ENCODE measurements at regions of chr10 and their contacts with region 1.

Region 1: GRCh38 chr10:2978111-2978510 is 89.2 kb upstream of the PFKP start:
- DNase-seq: no peak
- H3K4me3 Mint-ChIP-seq: no peak overlapping the region
- H3K27ac Mint-ChIP-seq: no peak overlapping the region
- H3K4me1 Mint-ChIP-seq: no peaks in the 10 kb centered on the region
- H3K27me3 Mint-ChIP-seq: peaks cover 4% of the 10 kb centered on the region

Region 2: GRCh38 chr10:2839081-2839725 is 138.9 kb before region 1 on chr10:
- intact Hi-C with region 1: loop called (anchors 5 kb)
- DNase-seq: no peak
- H3K4me3 Mint-ChIP-seq: no peak overlapping the region
- H3K27ac Mint-ChIP-seq: no peak overlapping the region
- H3K4me1 Mint-ChIP-seq: no peaks in the 10 kb centered on the region
- H3K27me3 Mint-ChIP-seq: peaks cover 14% of the 10 kb centered on the region

Region 3: DNA sequence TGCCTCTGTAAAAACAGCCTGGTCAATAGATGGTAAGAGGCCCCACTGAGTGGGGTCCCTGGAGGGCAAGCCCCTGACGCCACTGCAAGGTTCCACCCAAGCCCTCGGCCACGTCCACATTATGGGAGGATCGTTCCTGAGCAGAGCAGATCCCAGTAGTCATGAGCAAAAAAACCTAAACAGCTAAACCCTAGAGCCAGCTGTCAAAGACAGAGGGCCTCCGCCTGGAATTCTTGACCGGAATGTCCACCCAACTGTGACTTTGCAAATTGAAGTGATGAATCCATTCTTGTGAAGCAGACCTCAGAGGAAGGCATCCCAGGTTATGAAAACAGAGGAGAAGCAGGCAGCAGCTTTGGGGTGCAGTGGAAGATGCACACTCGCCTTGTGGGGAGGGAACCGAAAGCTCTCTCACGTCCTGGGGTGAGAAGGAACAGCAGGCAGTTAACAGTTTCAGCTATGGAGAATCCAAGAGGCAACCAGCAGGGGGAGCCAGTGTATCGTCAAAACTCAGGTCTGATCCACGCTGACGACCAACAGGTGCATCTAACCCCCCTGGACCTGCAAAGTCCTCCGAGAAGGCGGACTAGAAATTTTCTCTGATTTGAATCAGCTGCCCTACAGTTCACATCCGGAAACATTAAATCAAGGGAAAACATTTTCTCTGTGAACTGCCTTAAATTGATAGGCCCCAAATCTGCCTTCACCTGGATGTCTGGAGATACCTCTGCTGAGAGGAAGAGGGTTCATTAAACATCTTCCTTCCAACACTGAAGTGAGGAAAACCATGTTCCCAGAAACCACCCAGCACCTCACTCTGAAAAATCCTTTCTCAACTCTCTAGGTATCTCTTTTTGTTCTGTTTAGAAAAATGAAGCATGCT is 49.9 kb before region 1 on chr10:
- intact Hi-C with region 1: loop called (anchors 1 kb)
- DNase-seq: peak; percentile 56
- H3K4me3 Mint-ChIP-seq: no peak overlapping the region
- H3K27ac Mint-ChIP-seq: no peak overlapping the region
- H3K4me1 Mint-ChIP-seq: peaks cover 8% of the 10 kb centered on the region
- H3K27me3 Mint-ChIP-seq: peaks cover 24% of the 10 kb centered on the region

Region 4: DNA sequence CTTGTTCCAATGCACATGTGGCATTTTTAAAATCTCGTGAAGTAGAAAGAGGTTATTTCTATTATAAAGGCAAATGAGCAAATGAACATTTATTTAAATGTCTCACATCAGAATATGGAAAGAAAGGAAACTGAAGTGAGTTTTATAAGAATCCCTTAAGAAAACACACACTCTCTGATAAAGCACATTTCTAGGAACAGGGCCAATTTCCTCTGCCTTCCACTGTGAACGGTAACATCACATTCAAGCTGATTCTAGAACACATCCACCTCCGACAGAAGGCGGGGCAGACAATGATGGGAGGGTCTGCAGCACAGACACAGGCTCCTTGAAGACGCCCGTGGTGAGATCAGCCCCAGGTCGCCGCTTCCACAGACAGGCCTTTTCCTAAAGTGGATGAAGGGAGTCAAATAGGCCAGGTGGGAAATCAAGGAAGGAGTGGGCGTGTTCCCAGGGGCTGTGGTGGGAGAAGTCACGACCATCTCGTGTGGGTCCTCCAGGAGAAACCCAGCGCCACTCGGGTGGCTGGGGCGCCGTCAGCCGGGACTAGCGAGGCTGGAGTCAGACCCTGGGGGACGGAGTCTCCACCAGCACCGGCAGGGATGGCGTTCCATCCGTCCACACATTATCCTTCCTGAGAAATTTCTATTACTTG is 163.4 kb after region 1 on chr10:
- intact Hi-C with region 1: no loop called
- DNase-seq: no peak
- H3K4me3 Mint-ChIP-seq: no peak overlapping the region
- H3K27ac Mint-ChIP-seq: no peak overlapping the region
- H3K4me1 Mint-ChIP-seq: no peaks in the 10 kb centered on the region
- H3K27me3 Mint-ChIP-seq: no peaks in the 10 kb centered on the region